Breast epithelium (tissue), 4 donors: ENCODE measurements at regions of chr11 and their contacts with region 1.

Region 1: GRCh38 chr11:106585061-106585460 is 433.2 kb downstream of the GUCY1A2 start:
- DNase-seq: no peak
- H3K4me3 ChIP-seq: no peak overlapping the region
- H3K27ac ChIP-seq: no peak overlapping the region
- H3K4me1 ChIP-seq: no peaks in the 10 kb centered on the region
- H3K27me3 ChIP-seq: no peaks in the 10 kb centered on the region
- CTCF ChIP-seq: no peak
- POLR2A ChIP-seq: no peak

Region 2: GRCh38 chr11:106568632-106569031 is 16.4 kb before region 1 on chr11:
- intact Hi-C with region 1: no loop called
- DNase-seq: no peak
- H3K4me3 ChIP-seq: no peak overlapping the region
- H3K27ac ChIP-seq: no peak overlapping the region
- H3K4me1 ChIP-seq: no peaks in the 10 kb centered on the region
- H3K27me3 ChIP-seq: no peaks in the 10 kb centered on the region
- CTCF ChIP-seq: no peak
- POLR2A ChIP-seq: no peak

Region 3: GRCh38 chr11:106619320-106619990 is 34.4 kb after region 1 on chr11:
- intact Hi-C with region 1: loop called (anchors 2 kb)
- DNase-seq: no peak
- H3K4me3 ChIP-seq: no peak overlapping the region
- H3K27ac ChIP-seq: no peak overlapping the region
- H3K4me1 ChIP-seq: no peaks in the 10 kb centered on the region
- H3K27me3 ChIP-seq: no peaks in the 10 kb centered on the region
- CTCF ChIP-seq: no peak
- POLR2A ChIP-seq: no peak